ENCODE measurements at regions of chr2 and their contacts with region 1.

Region 1: DNA sequence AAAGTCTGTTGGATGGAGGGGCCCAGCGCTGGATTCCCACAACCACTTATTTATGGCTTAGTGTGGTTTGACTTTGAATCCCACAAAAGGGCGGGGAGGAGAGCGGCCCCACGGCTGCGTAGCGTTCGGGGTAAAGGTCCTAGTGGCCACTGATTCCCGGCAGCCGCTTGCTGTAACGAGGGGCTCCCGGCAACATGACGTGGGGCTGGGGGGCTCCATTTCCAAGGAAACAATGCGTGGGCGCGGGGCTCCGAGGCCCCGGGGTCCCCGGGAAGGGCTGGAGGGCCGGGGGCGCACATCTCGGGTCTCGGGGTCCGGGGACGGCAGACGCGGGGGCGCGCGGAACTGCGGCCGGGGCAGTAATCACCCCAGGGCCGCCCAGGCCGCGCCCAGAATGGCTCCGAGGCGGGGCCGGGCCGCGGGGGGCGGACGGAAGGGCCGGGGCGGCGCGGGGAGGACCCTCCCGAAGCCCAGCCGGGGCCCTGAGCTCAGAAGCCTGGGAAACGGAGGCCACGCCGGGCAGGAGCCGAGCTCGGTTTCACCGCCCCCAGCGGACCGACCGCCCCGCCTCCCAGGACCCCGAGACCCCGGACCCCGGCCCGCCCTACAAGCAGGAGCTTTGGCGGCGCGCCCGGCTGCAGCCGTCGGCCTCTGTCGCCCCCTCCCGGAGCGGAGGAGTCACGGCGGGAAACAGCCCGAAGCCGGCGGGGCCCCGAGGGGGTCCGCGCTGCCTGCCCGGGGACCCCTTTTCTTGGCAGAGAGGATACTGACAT is 11.9 kb upstream of the MLPH start:
- DNase-seq: peak; percentile 85
- H3K4me3 ChIP-seq: peak overlapping the region; percentile 74 to 76 (median 75)
- H3K27ac ChIP-seq: peak overlapping the region; percentile 90 to 96 (median 94)
- H3K4me1 ChIP-seq: peaks cover 4 to 19% (median 14%) of the 10 kb centered on the region in 4 donors
- H3K27me3 ChIP-seq: no peaks in the 10 kb centered on the region
- CTCF ChIP-seq: peak; percentile 87 to 96 (median 91)
- EP300 ChIP-seq: no peak
- POLR2A ChIP-seq: peak; percentile 48

Region 2: GRCh38 chr2:237122214-237122666 is 352.9 kb before region 1 on chr2:
- in situ Hi-C with region 1: no loop called
- intact Hi-C with region 1: loop called (anchors 10 kb)
- DNase-seq: peak; percentile 48
- H3K4me3 ChIP-seq: no peak overlapping the region
- H3K27ac ChIP-seq: no peak overlapping the region
- H3K4me1 ChIP-seq: peaks cover 0 to 18% (median 10%) of the 10 kb centered on the region in 4 donors
- H3K27me3 ChIP-seq: no peaks in the 10 kb centered on the region
- CTCF ChIP-seq: peak; percentile 52 to 65 (median 57)
- EP300 ChIP-seq: no peak
- POLR2A ChIP-seq: no peak